Keratinocyte (primary cell): ENCODE measurements at regions of chr1 and their contacts with region 1.

Region 1: DNA sequence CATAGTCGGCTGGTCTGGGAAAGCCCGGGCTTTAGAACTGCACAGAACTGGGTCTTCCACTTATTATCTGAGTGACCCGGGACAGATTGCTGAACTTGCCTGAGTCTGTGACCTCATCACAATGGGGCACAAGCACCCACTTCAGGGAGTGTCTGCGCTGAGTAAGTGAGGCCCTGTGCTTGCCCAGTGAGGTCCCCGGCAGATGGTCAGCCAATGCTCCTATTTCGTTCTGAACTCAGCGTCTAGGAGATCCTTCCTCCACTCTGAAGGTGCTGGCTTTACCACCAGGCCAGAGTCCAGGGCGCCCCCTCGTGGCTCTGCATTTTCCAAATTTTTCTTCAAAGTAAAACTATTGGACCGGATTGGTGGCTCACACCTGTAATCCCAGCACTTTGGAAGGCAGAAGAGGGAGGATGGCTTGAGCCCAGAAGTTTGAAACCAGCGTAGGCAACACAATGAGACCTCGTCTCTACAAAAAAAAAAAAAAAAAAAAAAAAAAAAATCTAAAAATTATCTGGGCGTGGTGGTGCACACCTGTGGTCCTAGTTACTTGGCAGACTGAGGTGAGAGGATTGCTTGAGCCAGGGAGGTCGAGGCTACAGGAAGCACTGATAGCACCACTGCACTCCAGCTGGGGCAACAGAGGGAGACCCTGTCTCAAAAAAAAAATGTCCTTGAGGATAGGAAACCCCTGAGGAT is 61.7 kb downstream of the FCRL5 start:
- DNase-seq: no peak
- H3K4me3 ChIP-seq: no peak overlapping the region
- H3K27ac ChIP-seq: no peak overlapping the region
- H3K4me1 ChIP-seq: no peaks in the 10 kb centered on the region
- H3K27me3 ChIP-seq: no peaks in the 10 kb centered on the region
- CTCF ChIP-seq: peak; percentile 61 to 72 (median 61)

Region 2: GRCh38 chr1:157369808-157370521 is 120.7 kb before region 1 on chr1:
- dilution Hi-C with region 1: loop called (anchors 25 kb)
- DNase-seq: no peak
- H3K4me3 ChIP-seq: no peak overlapping the region
- H3K27ac ChIP-seq: no peak overlapping the region
- H3K4me1 ChIP-seq: no peaks in the 10 kb centered on the region
- H3K27me3 ChIP-seq: no peaks in the 10 kb centered on the region
- CTCF ChIP-seq: peak; percentile 74 to 81 (median 80)

Region 3: DNA sequence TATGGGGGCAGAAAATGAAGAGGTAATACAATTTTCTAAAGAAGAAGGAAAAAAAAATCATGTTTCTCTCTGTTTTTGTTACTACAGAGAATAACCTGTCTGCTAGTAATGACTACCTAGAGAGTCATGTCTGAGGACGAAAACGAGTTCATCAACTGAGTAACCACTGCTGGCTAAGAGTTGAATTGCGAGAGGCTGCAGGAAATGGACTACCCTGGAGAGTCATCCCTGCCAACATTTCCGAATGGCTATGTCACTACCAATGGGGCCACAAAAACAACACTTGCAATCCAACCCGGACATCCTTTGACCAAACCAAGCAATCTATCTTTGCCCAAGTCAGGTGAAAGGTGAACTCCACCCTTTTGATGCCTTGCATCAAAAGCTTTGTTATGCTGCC is 58.9 kb before region 1 on chr1:
- dilution Hi-C with region 1: no loop called
- DNase-seq: no peak
- H3K4me3 ChIP-seq: no peak overlapping the region
- H3K27ac ChIP-seq: no peak overlapping the region
- H3K4me1 ChIP-seq: no peaks in the 10 kb centered on the region
- H3K27me3 ChIP-seq: no peaks in the 10 kb centered on the region
- CTCF ChIP-seq: no peak